Ascending aorta (tissue), 2 donors: ENCODE measurements at regions of chr14 and their contacts with region 1.

Region 1: GRCh38 chr14:103512701-103513611 is 9.7 kb downstream of the CKB start:
- DNase-seq: peak; percentile 76 to 95
- H3K4me3 ChIP-seq: peak overlapping the region in 1 of 2 donors; percentile 21
- H3K27ac ChIP-seq: peak overlapping the region; percentile 89 to 94
- H3K4me1 ChIP-seq: peaks cover 14 to 26% of the 10 kb centered on the region in 2 donors
- H3K27me3 ChIP-seq: no peaks in the 10 kb centered on the region
- CTCF ChIP-seq: peak in 1 of 3 experiments; percentile 19

Region 2: DNA sequence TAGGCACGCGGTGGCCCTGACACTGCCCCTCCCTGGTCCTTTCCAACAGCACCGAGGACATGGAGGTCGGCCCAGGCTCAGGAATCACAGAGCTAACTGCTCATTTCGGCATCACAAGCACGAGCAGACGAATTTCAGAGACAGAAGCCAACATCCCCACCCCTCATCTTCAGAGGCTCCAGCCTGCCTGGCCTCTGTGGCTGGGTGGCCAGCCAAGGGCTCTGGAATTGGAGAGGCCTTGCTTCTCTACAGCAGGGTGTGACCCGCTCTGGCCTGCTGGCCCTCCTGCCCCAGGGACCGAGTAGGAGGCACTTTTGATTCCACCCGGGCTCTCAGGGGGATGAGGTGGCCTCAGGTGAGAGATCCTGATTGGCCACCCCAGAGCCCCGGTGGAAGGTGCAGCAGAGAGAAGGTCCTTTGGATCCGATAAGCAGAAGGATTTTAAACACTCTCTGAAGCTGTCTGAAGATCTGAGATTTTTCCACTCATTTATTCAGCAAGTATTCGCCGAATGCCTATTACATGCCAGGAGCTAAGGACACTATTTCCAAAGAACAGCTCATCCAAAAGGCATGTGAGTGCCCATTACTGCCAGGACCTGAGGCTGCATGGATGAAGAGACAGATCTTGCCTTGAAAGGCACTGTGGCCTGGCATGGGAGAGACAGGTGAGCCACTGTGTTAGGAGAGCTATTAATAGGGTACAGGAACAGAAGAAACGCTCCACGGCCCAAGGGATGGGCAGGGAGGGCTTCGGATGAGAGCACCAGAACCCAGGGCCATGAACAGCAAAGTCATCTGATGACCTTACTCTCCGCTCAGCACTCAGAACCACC is 39.3 kb after region 1 on chr14:
- intact Hi-C with region 1: loop called (anchors 1 kb)
- DNase-seq: peak in 1 of 2 donors; percentile 86
- H3K4me3 ChIP-seq: peak overlapping the region; percentile 36 to 48
- H3K27ac ChIP-seq: peak overlapping the region; percentile 95 to 97
- H3K4me1 ChIP-seq: peaks cover 19 to 38% of the 10 kb centered on the region in 2 donors
- H3K27me3 ChIP-seq: no peaks in the 10 kb centered on the region
- CTCF ChIP-seq: no peak